PC-3 (cell line): ENCODE measurements at regions of chr2 and their contacts with region 1.

Region 1: GRCh38 chr2:227862227-227862740 is 9.1 kb upstream of the DAW1 start:
- DNase-seq: peak; percentile 71
- ATAC-seq: no peak
- H3K4me3 ChIP-seq: peak overlapping the region; percentile 37; the same call in 1 of the 2 replicates
- H3K27ac ChIP-seq: peak overlapping the region; percentile 97
- H3K4me1 ChIP-seq: peaks cover 22% of the 10 kb centered on the region
- H3K27me3 ChIP-seq: no peaks in the 10 kb centered on the region
- CTCF ChIP-seq: peak; percentile 75

Region 2: DNA sequence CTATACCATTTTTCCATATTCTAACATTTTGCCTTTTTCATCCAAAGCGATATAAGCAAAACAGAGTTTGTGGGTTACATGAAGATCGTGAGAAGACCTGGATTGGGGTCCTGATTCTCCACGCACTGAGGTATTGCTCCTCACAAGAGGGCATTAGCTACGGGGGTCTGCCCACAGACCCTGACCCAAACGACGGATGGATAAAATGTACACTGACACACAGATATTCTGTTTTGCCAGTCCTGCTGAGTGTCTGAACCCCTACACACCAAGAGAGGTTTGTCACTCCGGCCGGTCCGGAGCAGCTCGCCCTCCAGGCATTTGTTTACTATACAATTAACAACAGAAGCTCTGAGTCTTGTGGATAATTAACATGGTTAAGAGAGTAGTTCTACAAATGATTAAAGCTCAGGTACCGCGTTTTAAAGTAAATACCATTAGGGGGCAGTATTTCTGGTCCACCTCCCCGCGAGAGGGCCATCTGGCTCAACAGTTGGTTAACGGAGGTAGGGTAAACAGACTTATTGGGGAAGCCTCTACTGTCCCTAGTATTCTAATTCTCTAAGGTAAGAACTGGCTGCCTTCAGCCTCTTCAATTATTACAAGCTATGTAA is 88.2 kb before region 1 on chr2:
- CTCF ChIA-PET with region 1: interaction called, 5 read pairs
- POLR2A ChIA-PET with region 1: no interaction called
- intact Hi-C with region 1: loop called (anchors 2 kb)
- DNase-seq: peak; percentile 45
- ATAC-seq: no peak
- H3K4me3 ChIP-seq: no peak overlapping the region
- H3K27ac ChIP-seq: no peak overlapping the region
- H3K4me1 ChIP-seq: no peaks in the 10 kb centered on the region
- H3K27me3 ChIP-seq: no peaks in the 10 kb centered on the region
- CTCF ChIP-seq: peak; percentile 60

Region 3: GRCh38 chr2:227796045-227796711 is 66.1 kb before region 1 on chr2:
- CTCF ChIA-PET with region 1: interaction called, 7 read pairs
- POLR2A ChIA-PET with region 1: no interaction called
- intact Hi-C with region 1: loop called (anchors 2 kb)
- DNase-seq: peak; percentile 84
- ATAC-seq: peak; percentile 91
- H3K4me3 ChIP-seq: peak overlapping the region; percentile 2; the same call in 1 of the 2 replicates
- H3K27ac ChIP-seq: peak overlapping the region; percentile 9; the same call in 1 of the 2 replicates
- H3K4me1 ChIP-seq: peaks cover 15% of the 10 kb centered on the region
- H3K27me3 ChIP-seq: no peaks in the 10 kb centered on the region
- CTCF ChIP-seq: no peak

Region 4: GRCh38 chr2:227817850-227818674 is 44.2 kb before region 1 on chr2:
- CTCF ChIA-PET with region 1: interaction called, 6 read pairs
- POLR2A ChIA-PET with region 1: no interaction called
- intact Hi-C with region 1: loop called (anchors 1 kb)
- DNase-seq: peak; percentile 99
- ATAC-seq: peak; percentile 87
- H3K4me3 ChIP-seq: peak overlapping the region; percentile 52
- H3K27ac ChIP-seq: peak overlapping the region; percentile 98
- H3K4me1 ChIP-seq: peaks cover 42% of the 10 kb centered on the region
- H3K27me3 ChIP-seq: no peaks in the 10 kb centered on the region
- CTCF ChIP-seq: no peak

Region 5: DNA sequence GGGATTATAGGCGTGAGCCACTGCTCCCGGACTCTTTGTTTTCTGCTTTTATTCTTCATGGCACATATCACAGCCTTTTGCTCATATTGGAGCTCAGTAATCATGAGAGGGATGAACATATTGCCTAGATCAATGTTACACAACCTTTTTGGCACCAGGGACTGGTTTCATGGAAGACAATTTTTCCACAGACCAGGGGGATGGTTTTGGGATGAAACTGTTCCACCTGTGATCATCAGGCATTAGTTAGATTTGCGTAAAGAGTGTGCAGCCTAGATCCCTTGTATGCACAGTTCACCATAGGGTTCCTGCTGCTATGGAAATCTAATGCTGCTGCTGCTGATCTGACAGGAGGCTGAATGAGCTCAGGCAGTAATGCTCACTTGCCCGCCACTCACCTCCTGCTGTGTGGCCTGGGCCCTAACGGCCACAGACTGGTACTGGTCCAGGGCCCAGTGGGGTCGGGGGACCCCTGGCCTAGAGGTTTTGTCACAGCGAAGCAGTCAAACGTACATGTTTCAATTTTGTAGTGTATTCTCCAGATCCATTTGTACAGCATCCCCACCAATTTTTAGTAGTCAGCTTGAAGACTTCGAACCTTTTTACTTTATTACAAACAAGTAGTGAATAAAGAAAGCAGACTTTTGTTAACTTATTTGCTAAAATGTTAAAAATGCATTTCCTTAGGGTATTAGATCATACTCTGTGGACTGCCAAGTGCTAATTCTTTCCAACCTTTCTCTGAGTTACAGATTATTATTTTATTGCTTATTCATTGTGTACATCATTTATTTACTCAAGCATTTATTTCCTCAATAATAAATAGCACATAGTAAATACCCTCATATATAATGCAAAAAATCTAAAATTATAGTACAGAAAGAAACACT is 15.4 kb after region 1 on chr2:
- CTCF ChIA-PET with region 1: no interaction called
- POLR2A ChIA-PET with region 1: no interaction called
- intact Hi-C with region 1: loop called (anchors 2 kb)
- DNase-seq: peak; percentile 29
- ATAC-seq: peak; percentile 55
- H3K4me3 ChIP-seq: no peak overlapping the region
- H3K27ac ChIP-seq: peak overlapping the region; percentile 75
- H3K4me1 ChIP-seq: peaks cover 53% of the 10 kb centered on the region
- H3K27me3 ChIP-seq: no peaks in the 10 kb centered on the region
- CTCF ChIP-seq: no peak

Region 6: GRCh38 chr2:227884511-227884947 is 22.2 kb after region 1 on chr2:
- CTCF ChIA-PET with region 1: interaction called, 4 read pairs
- POLR2A ChIA-PET with region 1: no interaction called
- intact Hi-C with region 1: loop called (anchors 2 kb)
- DNase-seq: peak; percentile 79
- ATAC-seq: peak; percentile 82
- H3K4me3 ChIP-seq: no peak overlapping the region
- H3K27ac ChIP-seq: no peak overlapping the region
- H3K4me1 ChIP-seq: peaks cover 24% of the 10 kb centered on the region
- H3K27me3 ChIP-seq: no peaks in the 10 kb centered on the region
- CTCF ChIP-seq: peak; percentile 87